Activated CD4-positive, alpha-beta memory T cell treated with anti-CD3 and anti-CD28 coated beads for 36 hours (primary cell): ENCODE measurements at regions of chr5 and their contacts with region 1.

Region 1: DNA sequence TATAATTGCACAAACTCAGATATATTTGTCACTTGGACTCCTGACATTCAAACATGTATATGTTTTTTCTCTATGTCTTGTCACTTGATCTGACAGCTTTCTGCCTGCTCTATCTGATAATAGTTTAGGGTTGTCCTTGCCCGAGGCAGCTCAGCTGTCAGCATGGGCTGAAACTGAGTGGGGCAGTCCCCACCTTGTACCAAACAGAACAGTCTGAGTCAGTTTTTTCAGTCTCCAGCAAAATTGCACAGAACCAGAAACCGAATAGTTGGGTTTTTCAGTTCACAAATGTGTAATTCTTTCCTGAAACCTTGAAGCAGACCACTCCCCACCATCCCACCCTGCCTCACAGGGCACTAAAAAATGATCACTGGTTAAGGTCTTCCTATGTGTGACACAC is 9.5 kb upstream of the HAND1 start:
- DNase-seq: peak; percentile 74
- H3K4me3 Mint-ChIP-seq: no peak overlapping the region
- H3K27ac Mint-ChIP-seq: no peak overlapping the region
- H3K4me1 Mint-ChIP-seq: peaks cover 23% of the 10 kb centered on the region
- H3K27me3 Mint-ChIP-seq: peaks cover 67% of the 10 kb centered on the region

Region 2: DNA sequence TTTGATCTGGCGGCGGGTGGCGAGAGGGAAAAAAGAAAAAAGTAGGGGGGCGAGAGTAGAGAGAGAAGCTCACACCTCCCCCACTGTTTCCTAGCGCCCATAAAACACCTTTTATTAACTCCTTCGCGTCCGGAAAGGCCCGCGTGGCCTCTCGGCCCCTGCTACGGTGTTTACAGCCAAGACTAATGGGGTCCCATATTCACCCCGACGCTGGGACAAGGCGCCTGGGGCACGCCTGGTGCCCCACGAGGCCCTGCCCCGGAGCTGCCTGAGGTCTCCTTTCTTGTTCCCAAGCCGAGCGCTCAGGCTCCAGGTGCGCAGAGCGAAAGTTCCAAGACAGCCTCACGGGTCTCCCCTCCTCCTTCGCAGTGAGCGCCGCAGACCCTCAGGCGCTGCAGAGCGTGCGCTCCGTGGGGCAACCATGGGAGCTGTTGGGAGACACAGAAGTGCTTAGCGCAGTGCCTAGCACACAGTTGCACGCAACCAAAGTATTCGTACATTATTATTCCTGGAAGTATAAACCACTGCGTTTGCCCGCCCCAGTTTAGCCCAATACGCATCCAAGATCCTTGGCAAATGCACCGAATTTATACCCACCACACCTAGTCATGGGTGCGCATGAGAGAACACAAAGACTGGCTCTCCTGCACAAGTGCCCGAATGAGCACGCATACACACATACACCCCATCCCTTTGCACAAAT is 13.8 kb before region 1 on chr5:
- CTCF ChIA-PET with region 1: interaction called, 10 read pairs
- POLR2A ChIA-PET with region 1: interaction called, 3 read pairs
- intact Hi-C with region 1: loop called (anchors 1 kb)
- DNase-seq: no peak
- H3K4me3 Mint-ChIP-seq: no peak overlapping the region
- H3K27ac Mint-ChIP-seq: no peak overlapping the region
- H3K4me1 Mint-ChIP-seq: peaks cover 48% of the 10 kb centered on the region
- H3K27me3 Mint-ChIP-seq: peaks cover 72% of the 10 kb centered on the region

Region 3: DNA sequence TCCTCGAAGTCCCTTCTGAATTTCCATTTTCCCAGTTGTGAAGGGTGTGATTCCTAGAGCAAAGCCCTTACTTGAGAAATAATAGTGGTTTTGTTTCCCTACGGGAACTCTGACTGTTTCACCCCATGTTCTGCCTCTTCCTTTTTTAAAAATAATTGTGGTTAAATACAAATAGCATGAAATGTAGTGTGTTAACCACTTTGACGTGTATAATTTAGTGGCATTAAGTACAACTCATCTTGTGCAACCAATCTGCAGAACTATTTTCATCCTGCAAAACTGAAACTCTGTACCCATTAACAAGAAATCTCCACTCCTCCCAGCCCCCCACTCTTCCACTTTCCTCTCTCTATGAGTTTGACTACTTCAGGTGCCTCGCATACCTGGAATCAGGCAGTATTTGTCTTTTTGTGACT is 26.1 kb after region 1 on chr5:
- CTCF ChIA-PET with region 1: interaction called, 3 read pairs
- POLR2A ChIA-PET with region 1: no interaction called
- intact Hi-C with region 1: loop called (anchors 1 kb)
- DNase-seq: peak; percentile 40
- H3K4me3 Mint-ChIP-seq: no peak overlapping the region
- H3K27ac Mint-ChIP-seq: no peak overlapping the region
- H3K4me1 Mint-ChIP-seq: peaks cover 16% of the 10 kb centered on the region
- H3K27me3 Mint-ChIP-seq: peaks cover 37% of the 10 kb centered on the region